ENCODE measurements at regions of chr14 and their contacts with region 1.

Region 1: GRCh38 chr14:31561155-31561846 is at the start of gene NUBPL:
- DNase-seq: peak; percentile 98
- H3K4me3 ChIP-seq: peak within 1 kb of the TSS; percentile 65 to 81 (median 70)
- H3K27ac ChIP-seq: peak within 1 kb of the TSS; percentile 84 to 91 (median 86)
- H3K4me1 ChIP-seq: peaks cover 0 to 7% (median 3%) of the 10 kb centered on the region in 4 donors
- H3K27me3 ChIP-seq: no peaks in the 10 kb centered on the region
- CTCF ChIP-seq: no peak
- EP300 ChIP-seq: peak in 2 of 4 donors; percentile 19 to 81
- POLR2A ChIP-seq: peak; percentile 29 to 36
- total RNA-seq, gene NUBPL: 9.2 to 15.5 (median 13.2) TPM

Region 2: GRCh38 chr14:31420319-31421111 is 140.8 kb before region 1 on chr14 and contains the start of gene HEATR5A:
- intact Hi-C with region 1: loop called (anchors 5 kb)
- DNase-seq: peak; percentile 97
- H3K4me3 ChIP-seq: peak within 1 kb of the TSS; percentile 86 to 100 (median 92)
- H3K27ac ChIP-seq: peak within 1 kb of the TSS; percentile 90 to 95 (median 92)
- H3K4me1 ChIP-seq: peaks cover 0 to 36% (median 22%) of the 10 kb centered on the region in 4 donors
- H3K27me3 ChIP-seq: no peaks in the 10 kb centered on the region
- CTCF ChIP-seq: peak in 1 of 4 experiments; percentile 19
- EP300 ChIP-seq: no peak
- POLR2A ChIP-seq: peak; percentile 92 to 97
- total RNA-seq, gene HEATR5A: 27.6 to 41.9 (median 36.0) TPM

Region 3: GRCh38 chr14:31441271-31442110 is 119.8 kb before region 1 on chr14:
- intact Hi-C with region 1: no loop called
- DNase-seq: no peak
- H3K4me3 ChIP-seq: no peak overlapping the region
- H3K27ac ChIP-seq: peak overlapping the region in 3 of 4 donors; percentile 2 to 56 (median 51)
- H3K4me1 ChIP-seq: peaks cover 0 to 15% (median 7%) of the 10 kb centered on the region in 4 donors
- H3K27me3 ChIP-seq: no peaks in the 10 kb centered on the region
- CTCF ChIP-seq: no peak
- EP300 ChIP-seq: no peak
- POLR2A ChIP-seq: no peak

Region 4: DNA sequence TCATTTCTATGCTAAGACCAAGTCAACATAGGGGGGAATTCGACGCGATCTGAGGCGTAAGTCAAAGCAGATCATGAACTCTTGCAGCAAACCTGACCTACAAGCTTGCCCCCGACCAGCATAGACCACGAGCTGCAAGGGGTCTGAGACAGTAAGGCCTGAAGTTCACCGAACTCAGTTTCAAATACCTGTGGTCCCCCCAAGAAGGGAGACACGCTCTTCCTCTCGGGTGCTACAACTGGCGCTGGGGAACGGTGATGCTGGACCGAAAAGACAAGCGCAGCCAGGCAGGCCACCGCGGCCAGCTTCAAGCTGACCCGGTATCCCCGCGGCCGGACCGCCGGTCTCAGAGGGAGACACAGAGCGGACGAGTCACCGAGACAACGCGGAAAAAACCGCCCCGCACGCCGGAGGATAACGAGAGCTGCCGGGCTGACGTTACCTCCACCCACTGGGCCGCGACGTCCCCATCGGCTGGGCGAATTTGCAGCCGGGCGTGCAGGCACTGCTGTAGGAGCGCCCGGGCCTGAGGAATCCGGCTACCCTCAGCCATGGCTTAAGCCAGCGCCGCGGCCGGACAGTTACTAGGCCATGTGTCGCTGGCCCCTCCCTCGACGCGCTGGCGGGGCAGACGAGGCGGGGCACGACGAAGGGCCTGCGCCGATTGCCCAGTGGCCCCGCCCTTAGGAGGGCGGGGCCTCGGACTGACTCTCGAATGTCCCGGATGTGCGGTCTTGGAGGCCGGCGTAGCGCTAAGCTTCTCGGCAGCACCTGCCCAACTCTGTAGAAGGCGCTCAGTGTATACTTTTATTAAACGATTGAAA is 104.2 kb before region 1 on chr14 and contains the start of gene DTD2:
- intact Hi-C with region 1: loop called (anchors 5 kb)
- DNase-seq: peak; percentile 97
- H3K4me3 ChIP-seq: peak within 1 kb of the TSS; percentile 68 to 80 (median 74)
- H3K27ac ChIP-seq: peak within 1 kb of the TSS; percentile 88 to 95 (median 94)
- H3K4me1 ChIP-seq: peaks cover 0 to 32% (median 16%) of the 10 kb centered on the region in 4 donors
- H3K27me3 ChIP-seq: no peaks in the 10 kb centered on the region
- CTCF ChIP-seq: no peak
- EP300 ChIP-seq: no peak
- POLR2A ChIP-seq: peak; percentile 51 to 63
- total RNA-seq, gene DTD2: 26.0 to 31.6 (median 27.6) TPM

Region 5: DNA sequence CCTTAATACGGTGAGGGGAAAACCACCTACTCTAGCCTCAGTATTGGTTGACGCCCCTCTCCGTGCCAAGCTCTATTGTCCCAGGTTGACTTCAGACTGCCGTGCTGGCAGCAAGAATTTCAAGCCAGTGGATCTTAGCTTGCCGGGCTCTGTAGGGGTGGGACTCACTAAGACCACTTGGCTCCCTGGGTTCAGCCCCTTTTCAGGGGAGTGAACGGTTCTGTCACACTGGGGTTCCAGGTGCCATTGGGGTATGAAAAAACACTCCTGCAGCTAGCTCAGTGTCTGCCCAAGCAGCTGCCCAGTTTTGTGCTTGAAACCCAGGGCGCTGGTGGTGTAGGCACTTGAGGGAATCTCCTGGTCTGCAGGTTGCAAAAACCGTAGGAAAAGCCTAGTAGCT is 107.0 kb after region 1 on chr14:
- intact Hi-C with region 1: no loop called
- DNase-seq: no peak
- H3K4me3 ChIP-seq: no peak overlapping the region
- H3K27ac ChIP-seq: no peak overlapping the region
- H3K4me1 ChIP-seq: no peaks in the 10 kb centered on the region
- H3K27me3 ChIP-seq: no peaks in the 10 kb centered on the region
- CTCF ChIP-seq: no peak
- EP300 ChIP-seq: no peak
- POLR2A ChIP-seq: no peak

Region 6: DNA sequence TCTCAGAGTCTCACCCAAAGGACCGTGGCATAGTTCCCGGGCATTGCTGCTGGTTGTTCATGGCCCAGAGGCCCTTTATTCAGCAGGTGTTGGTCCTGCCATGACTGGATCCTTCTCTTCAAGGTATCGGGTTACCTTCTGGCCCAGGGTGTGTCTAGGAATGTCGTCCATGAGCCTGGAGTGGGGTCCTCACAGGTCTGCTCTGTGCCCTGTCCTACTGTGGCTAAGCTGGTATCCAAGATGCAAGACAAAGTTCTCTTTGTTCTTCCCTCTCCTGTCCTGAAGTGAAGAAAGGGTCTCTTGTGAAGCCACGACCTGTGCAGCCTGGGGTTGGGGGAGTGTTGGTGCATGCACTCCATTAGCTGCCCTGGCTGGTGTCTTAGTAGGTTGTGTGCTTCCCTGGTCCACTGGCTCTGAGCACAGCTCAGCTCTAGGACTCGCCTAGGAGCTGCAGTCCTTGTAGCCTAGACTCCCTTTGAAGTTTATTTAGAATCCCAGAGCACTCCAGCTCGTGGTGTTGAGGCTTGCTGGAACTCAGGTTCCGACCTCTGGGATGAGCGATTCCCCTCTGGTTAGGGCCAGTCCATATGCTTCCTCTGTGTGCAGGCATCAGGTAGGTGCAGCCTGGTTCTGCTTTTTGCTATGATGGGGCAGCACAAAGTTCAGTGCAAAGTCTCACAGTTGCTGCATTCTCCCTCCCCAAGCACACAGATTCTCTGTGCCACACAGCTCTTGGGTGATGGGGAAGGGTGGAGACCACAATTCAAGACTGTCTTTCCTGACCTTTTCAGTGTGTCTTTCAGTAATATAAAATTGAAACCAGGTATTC is 117.3 kb after region 1 on chr14:
- intact Hi-C with region 1: no loop called
- DNase-seq: no peak
- H3K4me3 ChIP-seq: no peak overlapping the region
- H3K27ac ChIP-seq: no peak overlapping the region
- H3K4me1 ChIP-seq: no peaks in the 10 kb centered on the region
- H3K27me3 ChIP-seq: no peaks in the 10 kb centered on the region
- CTCF ChIP-seq: no peak
- EP300 ChIP-seq: no peak
- POLR2A ChIP-seq: no peak

Region 7: GRCh38 chr14:31992011-31992447 is 430.7 kb after region 1 on chr14:
- intact Hi-C with region 1: loop called (anchors 5 kb)
- DNase-seq: no peak
- H3K4me3 ChIP-seq: no peak overlapping the region
- H3K27ac ChIP-seq: peak overlapping the region; percentile 4 to 73 (median 48)
- H3K4me1 ChIP-seq: peaks cover 0 to 50% (median 38%) of the 10 kb centered on the region in 4 donors
- H3K27me3 ChIP-seq: no peaks in the 10 kb centered on the region
- CTCF ChIP-seq: no peak
- EP300 ChIP-seq: peak; percentile 52 to 93 (median 80)
- POLR2A ChIP-seq: no peak

Region 8: DNA sequence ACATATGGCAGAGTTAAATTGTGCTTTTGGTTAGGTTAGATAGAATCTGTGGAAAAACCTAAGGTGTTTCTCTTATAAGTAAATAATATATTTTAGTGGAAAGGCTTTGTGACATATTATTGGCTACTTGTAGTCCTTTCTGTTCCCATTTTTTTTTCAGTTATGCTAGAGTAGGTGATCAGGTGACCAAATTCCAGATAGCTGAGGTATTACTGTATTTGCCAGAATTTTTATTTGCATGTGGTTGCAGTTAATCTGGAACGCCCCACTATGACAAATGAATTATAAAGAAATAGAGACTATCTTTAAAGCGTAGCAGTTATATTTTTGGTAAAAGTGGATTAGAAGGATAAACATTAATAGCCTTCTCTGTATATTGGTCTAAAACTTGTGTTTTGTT is 567.8 kb after region 1 on chr14:
- intact Hi-C with region 1: no loop called
- DNase-seq: no peak
- H3K4me3 ChIP-seq: no peak overlapping the region
- H3K27ac ChIP-seq: peak overlapping the region; percentile 37 to 76 (median 56)
- H3K4me1 ChIP-seq: peaks cover 0 to 27% (median 18%) of the 10 kb centered on the region in 4 donors
- H3K27me3 ChIP-seq: no peaks in the 10 kb centered on the region
- CTCF ChIP-seq: no peak
- EP300 ChIP-seq: peak in 1 of 4 donors; percentile 5
- POLR2A ChIP-seq: no peak

Region 9: DNA sequence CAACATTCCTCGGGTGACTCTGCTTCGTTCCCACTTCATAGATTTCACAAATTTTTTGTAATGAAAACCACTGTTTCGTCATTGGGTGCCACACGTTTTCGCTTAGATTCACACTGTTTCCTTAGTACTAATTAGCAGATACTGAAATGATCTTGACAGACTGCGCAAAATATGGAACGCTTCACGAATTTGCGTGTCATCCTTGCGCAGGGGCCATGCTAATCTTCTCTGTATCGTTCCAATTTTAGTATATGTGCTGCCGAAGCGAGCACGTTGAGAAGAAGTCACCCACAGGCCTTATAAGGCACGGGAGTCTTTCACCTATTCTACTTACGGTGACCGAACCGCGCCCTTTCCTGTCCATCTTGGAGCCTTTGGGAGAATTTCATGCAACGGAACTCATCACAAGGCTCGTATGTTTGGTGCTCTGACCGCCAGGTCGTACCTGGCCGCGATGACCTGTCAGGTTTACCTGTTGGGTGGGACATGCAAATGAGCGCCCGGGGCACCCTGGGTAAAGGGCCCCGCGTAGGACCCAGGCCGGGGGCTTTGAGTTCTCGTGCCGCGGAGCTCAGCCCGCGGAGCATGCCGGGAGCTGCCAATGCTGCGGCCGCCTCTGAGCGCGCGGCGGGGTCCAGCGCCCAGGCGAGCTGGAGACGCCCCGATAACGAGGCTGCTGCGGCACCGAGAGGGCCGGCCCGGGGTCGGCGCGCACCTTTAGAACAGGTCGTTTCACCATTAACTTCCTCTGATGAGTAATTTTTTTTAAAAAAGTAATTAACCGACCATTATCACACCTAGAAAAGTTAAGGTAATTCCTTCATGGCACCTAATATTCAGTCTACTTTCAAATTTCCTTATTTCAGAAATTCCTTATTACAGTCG is 641.9 kb after region 1 on chr14 and contains the start of gene RNU6-8:
- intact Hi-C with region 1: loop called (anchors 5 kb)
- DNase-seq: peak; percentile 95
- H3K4me3 ChIP-seq: peak within 1 kb of the TSS; percentile 64 to 68 (median 65)
- H3K27ac ChIP-seq: peak within 1 kb of the TSS; percentile 78 to 87 (median 84)
- H3K4me1 ChIP-seq: peaks cover 0 to 12% (median 9%) of the 10 kb centered on the region in 4 donors
- H3K27me3 ChIP-seq: no peaks in the 10 kb centered on the region
- CTCF ChIP-seq: no peak
- EP300 ChIP-seq: no peak
- POLR2A ChIP-seq: peak; percentile 43 to 58
- total RNA-seq, gene RNU6-8: not detected

Measured in sigmoid colon (tissue), 7 donors.